AG04449 (cell line): ENCODE measurements at regions of chr16 and their contacts with region 1.

Region 1: DNA sequence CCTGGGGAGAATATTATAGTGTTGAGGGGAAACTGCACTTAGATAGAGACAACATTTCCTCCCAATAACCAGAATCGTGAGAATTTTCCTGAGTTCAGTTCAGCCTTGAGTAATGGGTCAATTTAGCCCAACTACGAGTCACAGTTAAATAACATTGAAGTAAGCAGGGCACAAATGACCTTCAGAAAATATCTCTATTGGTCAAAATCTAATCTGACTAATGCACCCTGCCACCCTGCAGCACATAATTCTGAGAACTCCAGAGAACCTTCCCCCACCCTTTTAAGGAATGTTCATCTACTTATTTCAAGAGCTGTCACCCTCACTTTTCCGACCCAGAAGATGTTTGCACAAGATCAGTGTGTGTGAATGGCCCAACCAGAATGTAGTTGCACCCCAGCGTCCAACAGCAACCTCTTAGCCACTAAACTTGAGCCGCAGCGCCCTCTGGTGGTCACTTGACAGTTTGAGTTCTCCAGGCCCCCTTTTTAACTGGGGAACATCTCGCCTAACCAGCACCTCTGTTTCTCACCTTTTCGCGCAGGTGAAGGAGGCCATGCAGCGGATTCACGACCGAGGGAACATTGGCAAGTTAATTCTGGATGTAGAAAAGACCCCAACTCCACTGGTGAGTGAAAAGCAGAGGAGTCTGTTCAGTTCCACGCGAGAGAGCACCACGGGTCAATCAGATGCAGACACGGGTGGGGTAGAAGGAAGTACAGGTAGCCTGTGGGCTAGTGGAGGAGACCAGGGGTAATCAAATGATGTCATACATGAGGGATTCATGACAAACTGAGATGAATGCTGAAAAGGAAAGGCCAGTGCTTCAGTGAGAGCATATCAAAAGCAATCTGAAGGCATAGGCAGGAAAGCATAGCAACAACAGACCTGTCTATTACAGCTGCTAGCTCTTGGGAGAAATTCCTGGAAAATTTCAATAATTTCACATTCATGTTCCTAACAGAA is 50.8 kb upstream of the CLEC3A start:
- DNase-seq: peak; percentile 59
- H3K4me3 ChIP-seq: no peak overlapping the region
- CTCF ChIP-seq: peak; percentile 78

Region 2: DNA sequence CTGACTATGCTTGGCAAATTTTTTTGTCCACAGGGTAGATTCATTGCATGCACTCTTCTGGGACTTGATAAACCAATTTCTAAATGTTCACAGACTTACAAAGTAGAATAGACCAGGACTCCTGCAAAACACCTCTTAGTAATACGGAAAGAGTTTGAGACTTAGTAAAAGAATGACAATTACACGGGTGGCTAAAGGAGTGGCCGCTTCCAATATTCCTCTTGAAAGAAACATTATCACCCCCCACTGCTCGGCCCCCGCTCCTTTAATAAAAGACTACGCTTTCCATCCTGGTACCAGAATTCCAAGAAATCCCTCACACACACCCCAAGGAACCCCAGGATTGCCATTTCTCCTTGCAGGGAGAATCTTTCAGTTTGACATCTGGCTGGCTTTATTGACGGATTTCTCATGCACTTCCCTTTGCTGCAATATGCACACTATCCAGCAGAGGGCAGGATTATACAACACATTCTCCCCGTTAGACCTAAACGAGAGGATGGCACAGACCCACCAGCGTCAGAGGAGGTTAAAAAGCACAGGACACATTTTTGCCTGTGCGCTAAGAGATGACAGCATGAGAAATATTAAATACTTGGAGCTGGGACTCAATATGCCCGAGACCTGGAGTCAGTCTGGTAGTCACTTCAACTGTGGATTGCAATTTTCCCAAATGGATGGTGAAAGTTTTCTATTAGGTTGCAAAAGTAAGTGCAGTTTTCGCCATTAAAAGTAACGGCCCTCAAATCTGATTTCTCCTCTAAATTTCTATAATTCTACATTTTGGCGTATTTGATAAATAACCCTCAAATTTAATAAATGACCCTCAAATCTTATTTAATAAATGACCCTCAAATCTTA is 295.9 kb before region 1 on chr16:
- CTCF ChIA-PET with region 1: interaction called, 194 read pairs
- POLR2A ChIA-PET with region 1: no interaction called
- DNase-seq: no peak
- H3K4me3 ChIP-seq: no peak overlapping the region; the same call in 1 of the 2 replicates
- CTCF ChIP-seq: peak; percentile 72

Region 3: GRCh38 chr16:77722309-77723107 is 249.1 kb before region 1 on chr16 and contains the start of gene NUDT7:
- CTCF ChIA-PET with region 1: interaction called, 14 read pairs
- POLR2A ChIA-PET with region 1: no interaction called
- DNase-seq: peak; percentile 74
- H3K4me3 ChIP-seq: peak within 1 kb of the TSS; percentile 76
- CTCF ChIP-seq: peak; percentile 23

Region 4: GRCh38 chr16:77788181-77789084 is 183.2 kb before region 1 on chr16 and contains the start of gene VAT1L:
- CTCF ChIA-PET with region 1: interaction called, 16 read pairs
- POLR2A ChIA-PET with region 1: no interaction called
- DNase-seq: no peak
- H3K4me3 ChIP-seq: peak within 1 kb of the TSS; percentile 85
- CTCF ChIP-seq: no peak

Region 5: GRCh38 chr16:78002915-78003538 is 31.4 kb after region 1 on chr16:
- CTCF ChIA-PET with region 1: interaction called, 56 read pairs
- POLR2A ChIA-PET with region 1: no interaction called
- DNase-seq: peak; percentile 49
- H3K4me3 ChIP-seq: no peak overlapping the region
- CTCF ChIP-seq: peak; percentile 82

Region 6: GRCh38 chr16:78155791-78156345 is 184.3 kb after region 1 on chr16:
- CTCF ChIA-PET with region 1: no interaction called
- POLR2A ChIA-PET with region 1: no interaction called
- DNase-seq: no peak
- H3K4me3 ChIP-seq: no peak overlapping the region
- CTCF ChIP-seq: no peak